Caco-2 (cell line): ENCODE measurements at regions of chr9 and their contacts with region 1.

Region 1: DNA sequence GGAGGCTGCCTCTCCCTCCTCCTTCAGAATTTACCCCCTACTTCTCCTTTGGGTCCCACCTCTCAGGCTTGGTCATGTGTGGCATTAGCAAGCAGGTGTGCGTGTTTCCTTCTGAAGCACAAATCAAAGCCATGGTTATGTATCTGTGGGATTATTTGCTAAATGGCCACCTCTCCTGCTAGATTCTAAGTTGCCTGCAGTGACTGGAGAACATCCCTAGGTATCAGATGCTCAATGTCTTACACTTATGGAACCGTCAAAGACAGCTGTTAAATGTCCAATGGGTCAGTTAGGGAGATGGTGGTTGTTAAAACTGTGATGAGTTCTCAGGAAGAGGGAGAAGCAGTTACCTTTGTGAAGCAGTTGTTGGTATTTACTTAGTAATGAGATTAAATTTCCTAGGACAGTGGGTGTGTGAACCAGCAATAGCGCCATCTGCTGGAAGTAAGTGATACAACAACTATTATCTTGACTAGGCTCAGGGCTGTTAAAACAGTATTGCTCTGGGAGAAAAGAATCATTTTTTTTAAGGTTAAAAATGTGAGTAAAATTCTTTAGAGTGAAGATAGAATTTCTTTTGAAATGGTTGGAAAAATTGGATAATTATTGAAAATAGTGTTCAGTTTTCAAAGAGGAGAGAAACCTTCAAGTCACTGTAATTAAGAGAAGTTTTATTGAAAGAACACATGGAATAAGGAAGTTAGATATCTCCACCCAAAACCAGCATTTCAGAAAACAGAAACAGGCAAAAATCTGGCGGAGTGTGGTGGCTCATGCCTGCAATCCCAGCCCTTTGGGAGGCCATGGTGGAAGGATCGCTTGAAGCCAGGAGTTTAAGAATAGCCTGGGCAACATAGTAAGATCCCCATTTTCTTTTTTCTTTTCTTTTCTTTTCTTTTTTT is 71.3 kb downstream of the TMC1 start:
- DNase-seq: peak in 1 of 2 experiments; percentile 3
- H3K4me3 ChIP-seq: no peak overlapping the region
- H3K4me3 Mint-ChIP-seq: no peak overlapping the region
- H3K27ac Mint-ChIP-seq: no peak overlapping the region
- H3K4me1 ChIP-seq: no peaks in the 10 kb centered on the region
- H3K4me1 Mint-ChIP-seq: peaks cover 14% of the 10 kb centered on the region
- H3K27me3 ChIP-seq: no peaks in the 10 kb centered on the region
- H3K27me3 Mint-ChIP-seq: no peaks in the 10 kb centered on the region
- CTCF ChIP-seq: peak in 1 of 2 experiments; percentile 25

Region 2: GRCh38 chr9:72280913-72281500 is 311.7 kb before region 1 on chr9:
- CTCF ChIA-PET with region 1: no interaction called
- POLR2A ChIA-PET with region 1: no interaction called
- intact Hi-C with region 1: loop called (anchors 1 kb)
- DNase-seq: peak; percentile 29 to 38
- H3K4me3 ChIP-seq: no peak overlapping the region
- H3K4me3 Mint-ChIP-seq: no peak overlapping the region
- H3K27ac Mint-ChIP-seq: no peak overlapping the region
- H3K4me1 ChIP-seq: no peaks in the 10 kb centered on the region
- H3K4me1 Mint-ChIP-seq: no peaks in the 10 kb centered on the region
- H3K27me3 ChIP-seq: no peaks in the 10 kb centered on the region
- H3K27me3 Mint-ChIP-seq: no peaks in the 10 kb centered on the region
- CTCF ChIP-seq: peak; percentile 38 to 55

Region 3: DNA sequence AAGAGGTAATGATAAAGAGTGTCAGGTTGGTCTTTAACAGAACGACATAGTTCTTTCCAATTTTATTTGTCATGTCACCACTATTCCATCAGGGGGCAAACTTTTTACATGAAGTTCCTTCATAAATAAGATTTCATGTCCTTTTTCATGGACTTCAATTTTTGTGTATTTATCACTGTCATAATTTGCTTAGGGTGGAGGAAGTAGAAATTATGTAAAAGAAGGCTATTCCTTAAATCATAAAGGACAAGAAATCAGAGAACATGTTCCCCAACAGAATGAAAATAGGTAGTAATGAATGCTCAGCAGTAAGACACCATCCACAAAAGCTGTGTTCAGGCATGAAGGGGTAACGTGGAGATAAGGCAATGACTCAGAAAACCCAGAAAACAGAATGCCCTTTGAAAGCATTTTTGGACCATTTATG is 300.5 kb before region 1 on chr9:
- CTCF ChIA-PET with region 1: no interaction called
- POLR2A ChIA-PET with region 1: no interaction called
- intact Hi-C with region 1: loop called (anchors 5 kb)
- DNase-seq: no peak
- H3K4me3 ChIP-seq: no peak overlapping the region
- H3K4me3 Mint-ChIP-seq: no peak overlapping the region
- H3K27ac Mint-ChIP-seq: no peak overlapping the region
- H3K4me1 ChIP-seq: peaks cover 3% of the 10 kb centered on the region; the same call in 1 of the 2 replicates
- H3K4me1 Mint-ChIP-seq: peaks cover 4% of the 10 kb centered on the region
- H3K27me3 ChIP-seq: no peaks in the 10 kb centered on the region
- H3K27me3 Mint-ChIP-seq: no peaks in the 10 kb centered on the region
- CTCF ChIP-seq: no peak

Region 4: GRCh38 chr9:72315510-72316311 is 277.0 kb before region 1 on chr9:
- CTCF ChIA-PET with region 1: no interaction called
- POLR2A ChIA-PET with region 1: no interaction called
- intact Hi-C with region 1: no loop called
- DNase-seq: no peak
- H3K4me3 ChIP-seq: no peak overlapping the region
- H3K4me3 Mint-ChIP-seq: no peak overlapping the region
- H3K27ac Mint-ChIP-seq: no peak overlapping the region
- H3K4me1 ChIP-seq: no peaks in the 10 kb centered on the region
- H3K4me1 Mint-ChIP-seq: no peaks in the 10 kb centered on the region
- H3K27me3 ChIP-seq: no peaks in the 10 kb centered on the region
- H3K27me3 Mint-ChIP-seq: no peaks in the 10 kb centered on the region
- CTCF ChIP-seq: no peak

Region 5: DNA sequence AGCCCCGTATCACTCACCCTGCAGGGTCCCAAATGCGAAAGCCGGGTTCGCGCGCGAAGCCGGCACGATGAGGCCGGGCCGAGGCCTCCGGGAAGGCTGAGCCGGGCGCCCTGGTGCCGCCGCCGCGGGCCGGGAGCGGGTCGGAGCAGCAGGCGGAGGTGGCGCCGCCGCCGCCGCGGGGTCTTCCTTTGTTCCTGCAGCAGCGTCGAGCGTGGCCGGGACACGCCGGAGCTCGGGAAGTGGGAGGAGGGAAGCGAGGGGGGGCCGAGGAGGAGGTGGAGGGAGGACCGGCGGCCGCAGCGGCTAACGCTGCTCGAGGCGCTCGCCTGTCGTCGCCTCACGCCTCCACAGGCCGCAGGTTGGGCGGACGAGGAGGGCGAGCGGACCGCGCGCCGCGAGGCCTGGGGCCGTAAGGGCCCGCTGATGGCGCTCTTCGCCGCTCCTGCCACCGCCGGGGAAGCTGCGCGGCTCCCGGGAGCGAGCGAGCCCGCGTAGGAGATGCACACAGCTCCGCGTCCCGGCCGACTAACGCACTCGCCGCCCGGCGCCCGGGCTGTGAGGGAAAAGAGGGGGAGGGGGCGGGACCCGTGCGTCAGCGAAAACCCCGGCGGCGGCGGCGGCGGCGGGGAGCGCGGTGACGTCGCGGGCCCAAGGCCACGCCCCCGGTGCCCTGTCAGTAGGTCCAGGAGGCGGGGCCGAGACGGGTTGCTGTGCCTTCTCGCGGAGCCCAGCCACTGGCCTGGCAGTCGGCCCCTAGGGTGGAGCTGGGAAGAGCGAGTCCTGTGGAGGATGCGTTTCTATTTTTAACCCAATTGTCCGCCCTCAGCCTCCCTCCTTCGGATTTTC is 227.9 kb before region 1 on chr9 and contains the start of gene ZFAND5:
- CTCF ChIA-PET with region 1: no interaction called
- POLR2A ChIA-PET with region 1: interaction called, 3 read pairs
- intact Hi-C with region 1: loop called (anchors 2 kb)
- DNase-seq: peak; percentile 83 to 85
- H3K4me3 ChIP-seq: peak within 1 kb of the TSS; percentile 56
- H3K4me3 Mint-ChIP-seq: peak within 1 kb of the TSS; percentile 84
- H3K27ac Mint-ChIP-seq: peak within 1 kb of the TSS; percentile 88
- H3K4me1 ChIP-seq: no peaks in the 10 kb centered on the region
- H3K4me1 Mint-ChIP-seq: no peaks in the 10 kb centered on the region
- H3K27me3 ChIP-seq: no peaks in the 10 kb centered on the region
- H3K27me3 Mint-ChIP-seq: no peaks in the 10 kb centered on the region
- CTCF ChIP-seq: no peak
- total RNA-seq, gene ZFAND5: 30.9 and 34.4 TPM in 2 replicates

Region 6: GRCh38 chr9:72473474-72474261 is 119.1 kb before region 1 on chr9:
- CTCF ChIA-PET with region 1: no interaction called
- POLR2A ChIA-PET with region 1: no interaction called
- intact Hi-C with region 1: loop called (anchors 10 kb)
- DNase-seq: no peak
- H3K4me3 ChIP-seq: no peak overlapping the region
- H3K4me3 Mint-ChIP-seq: no peak overlapping the region
- H3K27ac Mint-ChIP-seq: no peak overlapping the region
- H3K4me1 ChIP-seq: peaks cover 7% of the 10 kb centered on the region; the same call in 1 of the 2 replicates
- H3K4me1 Mint-ChIP-seq: no peaks in the 10 kb centered on the region
- H3K27me3 ChIP-seq: no peaks in the 10 kb centered on the region
- H3K27me3 Mint-ChIP-seq: no peaks in the 10 kb centered on the region
- CTCF ChIP-seq: no peak

Region 7: DNA sequence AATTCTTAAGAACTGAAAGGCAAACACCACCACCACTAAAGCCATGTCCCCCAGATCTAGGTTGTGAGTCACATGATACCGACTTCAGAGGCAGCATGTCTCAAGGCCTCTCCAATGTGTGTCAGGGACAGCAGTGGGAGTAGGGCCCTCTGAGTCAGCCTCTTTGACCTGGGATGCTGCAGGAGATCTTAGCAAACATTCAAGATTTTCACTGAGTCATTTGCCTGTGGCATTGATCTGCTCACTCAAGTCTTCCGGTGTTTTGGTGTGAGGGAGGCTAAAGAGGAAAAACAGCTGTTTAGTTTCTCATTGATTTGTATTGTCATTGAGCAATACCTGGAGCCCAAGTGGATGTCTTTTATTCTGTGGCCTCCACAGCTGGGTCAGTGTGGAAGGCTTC is 35.2 kb before region 1 on chr9:
- CTCF ChIA-PET with region 1: no interaction called
- POLR2A ChIA-PET with region 1: no interaction called
- intact Hi-C with region 1: loop called (anchors 2 kb)
- DNase-seq: peak; percentile 17 to 61
- H3K4me3 ChIP-seq: no peak overlapping the region
- H3K4me3 Mint-ChIP-seq: no peak overlapping the region
- H3K27ac Mint-ChIP-seq: no peak overlapping the region
- H3K4me1 ChIP-seq: peaks cover 4% of the 10 kb centered on the region; the same call in 1 of the 2 replicates
- H3K4me1 Mint-ChIP-seq: no peaks in the 10 kb centered on the region
- H3K27me3 ChIP-seq: no peaks in the 10 kb centered on the region
- H3K27me3 Mint-ChIP-seq: no peaks in the 10 kb centered on the region
- CTCF ChIP-seq: no peak